Activated T-helper 1 cell treated with anti-CD3 and anti-CD28 coated beads, Interleukin-12 subunit alpha, Interleukin-12 subunit beta, Interleukin-2, Interleukin-4 antibody, amounts not matched to agents 30 ng/mL and 10 ng/mL and 1 ng/mL, durations not matched to agents 14 hours and 24 hours and 36 hours (primary cell): ENCODE measurements at regions of chr4 and their contacts with region 1.

Region 1: GRCh38 chr4:139603576-139604387 is 47.8 kb upstream of the SETD7 start:
- DNase-seq: peak; percentile 9
- H3K4me3 Mint-ChIP-seq: no peak overlapping the region
- H3K27ac Mint-ChIP-seq: no peak overlapping the region
- H3K4me1 Mint-ChIP-seq: peaks cover 15% of the 10 kb centered on the region
- H3K27me3 Mint-ChIP-seq: peaks cover 2% of the 10 kb centered on the region

Region 2: GRCh38 chr4:139554893-139555704 is 48.7 kb before region 1 on chr4:
- intact Hi-C with region 1: loop called (anchors 2 kb)
- DNase-seq: peak; percentile 78
- H3K4me3 Mint-ChIP-seq: peak overlapping the region; percentile 93
- H3K27ac Mint-ChIP-seq: peak overlapping the region; percentile 96
- H3K4me1 Mint-ChIP-seq: peaks cover 47% of the 10 kb centered on the region
- H3K27me3 Mint-ChIP-seq: peaks cover 13% of the 10 kb centered on the region

Region 3: DNA sequence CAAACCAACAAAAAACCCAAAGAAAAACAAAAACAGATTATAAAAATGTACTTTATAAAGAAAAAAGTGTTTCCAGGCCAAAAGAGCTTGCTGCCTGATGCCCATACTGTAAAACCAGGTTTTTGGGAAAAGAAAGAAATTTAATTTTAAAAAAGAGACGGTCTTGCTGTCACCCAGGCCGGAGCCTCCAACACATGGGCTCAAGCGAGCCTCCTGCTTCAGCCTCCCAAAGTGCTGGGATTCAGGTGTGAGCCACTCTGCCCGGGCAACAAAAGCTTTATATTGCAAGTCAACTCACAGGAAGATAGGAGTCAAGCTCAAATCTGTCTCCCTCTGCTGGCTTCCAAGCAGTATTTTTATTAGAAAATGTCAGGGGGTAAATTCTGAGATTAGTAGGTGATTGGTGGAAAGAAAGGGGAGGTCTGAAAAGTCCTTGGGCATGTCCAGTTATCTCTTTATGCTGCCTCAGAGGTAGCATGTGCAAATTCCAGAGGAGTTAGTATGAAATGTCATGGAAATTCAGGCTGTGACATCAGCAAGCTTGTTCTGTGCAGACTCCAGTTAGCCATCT is 101.2 kb after region 1 on chr4:
- intact Hi-C with region 1: loop called (anchors 10 kb)
- DNase-seq: no peak
- H3K4me3 Mint-ChIP-seq: no peak overlapping the region
- H3K27ac Mint-ChIP-seq: no peak overlapping the region
- H3K4me1 Mint-ChIP-seq: no peaks in the 10 kb centered on the region
- H3K27me3 Mint-ChIP-seq: no peaks in the 10 kb centered on the region

Region 4: GRCh38 chr4:139749338-139749737 is 145.6 kb after region 1 on chr4:
- intact Hi-C with region 1: no loop called
- DNase-seq: no peak
- H3K4me3 Mint-ChIP-seq: no peak overlapping the region
- H3K27ac Mint-ChIP-seq: no peak overlapping the region
- H3K4me1 Mint-ChIP-seq: no peaks in the 10 kb centered on the region
- H3K27me3 Mint-ChIP-seq: peaks cover 3% of the 10 kb centered on the region

Region 5: DNA sequence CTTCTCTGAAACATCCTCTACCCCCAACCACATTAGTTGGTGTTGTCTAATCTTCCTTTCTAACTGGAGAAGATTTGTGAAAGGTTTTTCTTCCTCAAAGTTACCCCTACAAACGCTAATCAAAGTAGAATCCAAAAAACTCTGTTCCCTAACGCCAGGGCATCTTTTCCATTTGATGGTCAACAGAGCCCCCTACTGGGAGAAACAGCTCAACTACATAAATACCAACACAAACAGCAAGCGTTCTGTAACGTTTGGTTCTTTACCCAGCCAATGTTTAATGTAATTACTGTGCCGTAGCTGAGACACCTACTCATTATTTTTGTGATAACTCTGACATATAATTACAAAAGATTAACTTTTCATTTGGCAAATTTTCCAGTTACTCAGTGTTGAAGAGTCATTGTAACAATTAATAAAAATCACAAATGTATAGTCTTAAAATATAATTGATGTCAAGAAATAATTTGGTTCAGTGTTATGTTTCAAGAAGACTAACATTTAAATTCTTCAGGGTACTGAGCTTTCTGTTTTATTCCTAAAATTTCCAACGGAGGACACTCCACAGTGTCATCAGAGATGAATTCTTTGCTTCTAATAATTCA is 1247.4 kb after region 1 on chr4:
- intact Hi-C with region 1: loop called (anchors 5 kb)
- DNase-seq: peak; percentile 3
- H3K4me3 Mint-ChIP-seq: no peak overlapping the region
- H3K27ac Mint-ChIP-seq: no peak overlapping the region
- H3K4me1 Mint-ChIP-seq: no peaks in the 10 kb centered on the region
- H3K27me3 Mint-ChIP-seq: peaks cover 2% of the 10 kb centered on the region